B cell (primary cell): ENCODE measurements at regions of chr17 and their contacts with region 1.

Region 1: DNA sequence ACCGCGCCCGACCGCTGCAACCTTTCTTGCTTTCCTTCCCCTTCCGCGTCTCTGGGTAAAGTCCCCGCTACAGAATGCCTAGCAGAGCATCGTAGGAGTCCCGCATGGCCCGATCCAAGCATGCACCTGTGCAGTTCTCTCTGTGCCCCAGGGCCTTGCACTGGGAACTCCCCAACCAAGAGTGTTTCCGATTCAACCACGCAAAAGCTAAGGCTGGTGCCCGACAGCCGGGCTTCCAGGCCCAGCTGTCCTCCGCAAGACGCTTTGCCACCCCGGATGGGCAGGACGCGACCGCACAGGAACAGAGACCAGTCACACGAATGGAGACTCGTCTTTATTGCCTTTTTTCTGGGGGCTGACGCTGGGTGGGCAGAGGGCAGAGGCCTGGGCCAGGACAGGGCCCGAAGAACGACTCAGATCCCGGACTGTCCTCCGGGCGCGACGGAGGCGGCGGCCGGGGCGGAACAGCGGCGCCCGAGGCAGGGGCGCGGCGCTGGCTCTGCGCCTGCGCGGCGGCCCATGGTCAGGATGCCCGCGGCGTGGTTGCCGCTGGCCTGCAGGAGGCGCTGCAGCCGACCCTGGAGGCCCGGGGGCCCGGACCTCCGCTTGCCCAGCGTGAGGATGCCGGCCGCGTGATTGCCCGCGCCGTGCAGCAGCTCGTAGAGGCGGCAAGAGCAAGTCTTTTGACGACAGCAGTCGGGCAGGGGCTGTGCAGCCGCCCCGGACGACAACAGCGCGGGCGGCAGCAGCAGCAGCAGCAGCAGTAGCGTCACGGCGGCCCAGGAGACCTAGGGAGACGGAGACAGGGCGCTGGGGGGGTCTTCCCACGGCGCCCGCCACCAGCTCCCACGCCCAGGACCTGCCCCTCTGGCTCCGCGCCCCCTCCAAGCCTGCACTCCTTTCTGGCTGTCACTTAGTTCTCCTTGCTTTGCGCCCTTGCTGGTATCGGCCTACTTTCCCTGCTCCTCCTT is 1.2 kb downstream of the HCRT start:
- DNase-seq: peak; percentile 91
- ATAC-seq: peak; percentile 69
- H3K4me3 ChIP-seq: peak overlapping the region; percentile 64 to 81 (median 74)
- H3K4me3 Mint-ChIP-seq: peak overlapping the region; percentile 93
- H3K27ac ChIP-seq: peak overlapping the region; percentile 90 to 95
- H3K27ac Mint-ChIP-seq: peak overlapping the region; percentile 93
- H3K4me1 ChIP-seq: peaks cover 37 to 49% of the 10 kb centered on the region in 2 donors
- H3K4me1 Mint-ChIP-seq: peaks cover 49% of the 10 kb centered on the region
- H3K27me3 ChIP-seq: peaks cover 0 to 17% (median 2%) of the 10 kb centered on the region in 4 experiments
- H3K27me3 Mint-ChIP-seq: no peaks in the 10 kb centered on the region
- CTCF ChIP-seq: peak; percentile 90

Region 2: GRCh38 chr17:40818733-40819527 is 1365.1 kb before region 1 on chr17:
- CTCF ChIA-PET with region 1: no interaction called
- POLR2A ChIA-PET with region 1: no interaction called
- intact Hi-C with region 1: loop called (anchors 5 kb)
- DNase-seq: peak; percentile 95
- ATAC-seq: peak; percentile 91
- H3K4me3 ChIP-seq: peak overlapping the region; percentile 50 to 95 (median 71)
- H3K4me3 Mint-ChIP-seq: peak overlapping the region; percentile 89
- H3K27ac ChIP-seq: peak overlapping the region; percentile 68 to 86
- H3K27ac Mint-ChIP-seq: peak overlapping the region; percentile 85
- H3K4me1 ChIP-seq: peaks cover 8 to 13% of the 10 kb centered on the region in 2 donors
- H3K4me1 Mint-ChIP-seq: peaks cover 18% of the 10 kb centered on the region
- H3K27me3 ChIP-seq: peaks cover 0 to 6% (median 0%) of the 10 kb centered on the region in 4 experiments
- H3K27me3 Mint-ChIP-seq: peaks cover 16% of the 10 kb centered on the region
- CTCF ChIP-seq: no peak

Region 3: GRCh38 chr17:42112552-42113176 is 71.4 kb before region 1 on chr17 and contains the start of gene DHX58:
- CTCF ChIA-PET with region 1: interaction called, 14 read pairs
- POLR2A ChIA-PET with region 1: interaction called, 4 read pairs
- intact Hi-C with region 1: loop called (anchors 2 kb)
- DNase-seq: peak; percentile 91
- ATAC-seq: peak; percentile 71
- H3K4me3 ChIP-seq: peak within 1 kb of the TSS; percentile 26 to 77 (median 53)
- H3K4me3 Mint-ChIP-seq: peak within 1 kb of the TSS; percentile 88
- H3K27ac ChIP-seq: peak within 1 kb of the TSS; percentile 85 to 88
- H3K27ac Mint-ChIP-seq: peak within 1 kb of the TSS; percentile 97
- H3K4me1 ChIP-seq: peaks cover 38 to 54% of the 10 kb centered on the region in 2 donors
- H3K4me1 Mint-ChIP-seq: peaks cover 57% of the 10 kb centered on the region
- H3K27me3 ChIP-seq: no peaks in the 10 kb centered on the region
- H3K27me3 Mint-ChIP-seq: no peaks in the 10 kb centered on the region
- CTCF ChIP-seq: no peak
- total RNA-seq, gene DHX58: 34.6 and 39.7 TPM in 2 replicates

Region 4: GRCh38 chr17:42153919-42154742 is 29.9 kb before region 1 on chr17:
- CTCF ChIA-PET with region 1: interaction called, 3 read pairs
- POLR2A ChIA-PET with region 1: no interaction called
- intact Hi-C with region 1: loop called (anchors 1 kb)
- DNase-seq: no peak
- ATAC-seq: no peak
- H3K4me3 ChIP-seq: peak overlapping the region; percentile 91 to 100 (median 99)
- H3K4me3 Mint-ChIP-seq: peak overlapping the region; percentile 94
- H3K27ac ChIP-seq: peak overlapping the region; percentile 74 to 94
- H3K27ac Mint-ChIP-seq: peak overlapping the region; percentile 96
- H3K4me1 ChIP-seq: peaks cover 14 to 23% of the 10 kb centered on the region in 2 donors
- H3K4me1 Mint-ChIP-seq: peaks cover 34% of the 10 kb centered on the region
- H3K27me3 ChIP-seq: no peaks in the 10 kb centered on the region
- H3K27me3 Mint-ChIP-seq: no peaks in the 10 kb centered on the region
- CTCF ChIP-seq: no peak

Region 5: DNA sequence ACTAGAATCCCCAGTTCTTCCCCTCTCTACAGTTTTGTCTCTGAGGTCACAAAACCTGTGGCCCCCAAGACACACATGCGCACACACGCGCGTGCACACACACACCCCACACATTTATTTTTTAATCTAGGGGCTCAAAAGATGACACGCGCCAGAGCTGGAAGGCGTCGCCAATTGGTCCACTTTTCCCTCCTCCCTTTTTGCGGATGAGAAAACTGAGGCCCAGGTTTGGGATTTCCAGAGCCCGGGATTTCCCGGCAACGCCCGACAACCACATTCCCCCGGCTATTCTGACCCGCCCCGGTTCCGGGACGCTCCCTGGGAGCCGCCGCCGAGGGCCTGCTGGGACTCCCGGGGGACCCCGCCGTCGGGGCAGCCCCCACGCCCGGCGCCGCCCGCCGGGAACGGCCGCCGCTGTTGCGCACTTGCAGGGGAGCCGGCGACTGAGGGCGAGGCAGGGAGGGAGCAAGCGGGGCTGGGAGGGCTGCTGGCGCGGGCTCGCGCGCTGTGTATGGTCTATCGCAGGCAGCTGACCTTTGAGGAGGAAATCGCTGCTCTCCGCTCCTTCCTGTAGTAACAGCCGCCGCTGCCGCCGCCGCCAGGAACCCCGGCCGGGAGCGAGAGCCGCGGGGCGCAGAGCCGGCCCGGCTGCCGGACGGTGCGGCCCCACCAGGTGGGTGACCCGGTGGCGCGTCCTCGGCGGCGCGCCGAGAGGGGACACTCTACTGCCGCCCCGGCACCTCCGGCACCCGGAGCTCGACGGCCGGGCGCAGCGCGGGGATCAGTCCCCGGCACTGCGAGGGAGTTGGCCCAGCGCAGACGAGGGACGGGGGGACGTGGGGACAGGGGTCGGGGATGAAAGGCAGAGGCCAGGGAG is 104.1 kb after region 1 on chr17 and contains the start of gene STAT5A:
- CTCF ChIA-PET with region 1: interaction called, 5 read pairs
- POLR2A ChIA-PET with region 1: interaction called, 6 read pairs
- intact Hi-C with region 1: loop called (anchors 2 kb)
- DNase-seq: peak; percentile 87
- ATAC-seq: peak; percentile 83
- H3K4me3 ChIP-seq: peak within 1 kb of the TSS; percentile 62 to 93 (median 73)
- H3K4me3 Mint-ChIP-seq: peak within 1 kb of the TSS; percentile 97
- H3K27ac ChIP-seq: peak within 1 kb of the TSS; percentile 75 to 89
- H3K27ac Mint-ChIP-seq: peak within 1 kb of the TSS; percentile 91
- H3K4me1 ChIP-seq: peaks cover 24 to 36% of the 10 kb centered on the region in 2 donors
- H3K4me1 Mint-ChIP-seq: peaks cover 41% of the 10 kb centered on the region
- H3K27me3 ChIP-seq: no peaks in the 10 kb centered on the region
- H3K27me3 Mint-ChIP-seq: no peaks in the 10 kb centered on the region
- CTCF ChIP-seq: no peak
- total RNA-seq, gene STAT5A: 104 and 110 TPM in 2 replicates

Region 6: DNA sequence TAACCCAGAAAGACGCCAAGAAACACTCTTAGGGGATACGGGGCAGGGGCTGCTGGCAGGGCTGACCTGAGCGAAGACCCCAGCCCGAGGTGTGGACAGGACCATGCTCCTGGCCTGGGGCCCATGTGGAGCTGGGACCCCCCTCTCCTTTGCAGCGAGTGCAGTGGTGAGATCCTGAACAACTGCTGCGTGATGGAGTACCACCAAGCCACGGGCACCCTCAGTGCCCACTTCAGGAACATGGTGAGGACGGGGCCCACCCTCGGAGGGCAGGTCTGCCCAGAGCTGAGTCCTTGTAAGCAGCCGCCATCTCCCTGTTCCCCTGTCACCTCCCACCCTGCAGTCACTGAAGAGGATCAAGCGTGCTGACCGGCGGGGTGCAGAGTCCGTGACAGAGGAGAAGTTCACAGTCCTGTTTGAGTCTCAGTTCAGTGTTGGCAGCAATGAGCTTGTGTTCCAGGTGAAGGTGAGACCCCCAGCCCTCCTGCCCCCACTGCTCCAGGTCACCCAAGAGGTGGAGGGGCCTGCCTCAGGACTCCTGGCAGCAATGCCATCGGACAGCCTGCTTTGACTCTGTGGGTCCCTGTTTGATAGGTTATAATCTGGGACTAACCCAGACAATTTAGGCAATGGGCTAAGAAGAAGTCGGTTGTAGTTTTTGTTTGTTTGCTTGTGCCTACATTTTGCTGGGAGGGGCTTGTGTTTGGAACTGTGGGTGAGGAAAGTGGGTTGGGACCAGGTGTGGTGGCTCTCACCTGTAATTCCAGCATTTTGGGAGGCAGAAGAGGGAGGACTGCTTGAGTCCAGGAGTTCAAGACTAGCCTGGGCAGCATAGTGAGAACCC is 120.4 kb after region 1 on chr17:
- CTCF ChIA-PET with region 1: no interaction called
- POLR2A ChIA-PET with region 1: no interaction called
- intact Hi-C with region 1: no loop called
- DNase-seq: no peak
- ATAC-seq: no peak
- H3K4me3 ChIP-seq: no peak overlapping the region
- H3K4me3 Mint-ChIP-seq: no peak overlapping the region
- H3K27ac ChIP-seq: no peak overlapping the region
- H3K27ac Mint-ChIP-seq: no peak overlapping the region
- H3K4me1 ChIP-seq: no peaks in the 10 kb centered on the region
- H3K4me1 Mint-ChIP-seq: no peaks in the 10 kb centered on the region
- H3K27me3 ChIP-seq: no peaks in the 10 kb centered on the region
- H3K27me3 Mint-ChIP-seq: no peaks in the 10 kb centered on the region
- CTCF ChIP-seq: no peak

Region 7: DNA sequence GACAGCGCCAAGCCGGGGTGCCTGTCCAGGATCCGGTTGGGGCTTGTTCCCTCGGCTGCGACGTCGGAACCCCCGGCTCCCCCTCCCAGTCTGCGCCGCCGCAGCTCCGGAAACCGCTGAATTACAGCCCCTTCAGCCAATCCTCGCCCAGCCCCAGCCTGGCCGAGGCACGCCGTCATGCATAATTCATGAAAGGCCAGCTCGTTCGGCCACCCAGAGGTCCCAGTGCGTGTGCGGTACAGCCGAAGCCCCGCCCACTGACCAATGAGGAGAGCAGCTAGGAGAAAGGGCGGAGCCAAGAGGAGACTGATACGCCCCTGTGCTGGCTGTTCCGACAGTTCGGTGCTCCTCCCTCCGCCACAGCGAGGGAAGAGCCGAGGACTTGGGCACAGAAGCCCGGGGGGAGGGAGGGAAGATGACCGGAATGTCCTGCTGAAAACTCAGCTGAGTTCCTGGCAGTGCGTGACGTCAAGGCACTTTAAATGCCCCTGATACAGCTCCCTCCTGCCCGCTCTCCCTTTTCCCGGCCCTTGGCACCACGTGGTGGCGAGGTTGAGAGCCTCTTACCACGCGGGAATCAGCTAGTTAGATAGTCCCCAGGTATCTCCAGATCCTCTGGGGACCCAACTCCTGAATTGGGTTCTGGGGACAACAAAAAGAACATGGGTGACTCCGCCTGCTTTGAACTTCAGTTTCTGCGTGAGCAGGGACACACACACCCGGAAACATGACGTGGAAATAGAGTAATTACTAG is 204.5 kb after region 1 on chr17 and contains the start of gene STAT3:
- CTCF ChIA-PET with region 1: no interaction called
- POLR2A ChIA-PET with region 1: no interaction called
- intact Hi-C with region 1: loop called (anchors 2 kb)
- DNase-seq: peak; percentile 100
- ATAC-seq: peak; percentile 89
- H3K4me3 ChIP-seq: peak within 1 kb of the TSS; percentile 67 to 97 (median 91)
- H3K4me3 Mint-ChIP-seq: peak within 1 kb of the TSS; percentile 98
- H3K27ac ChIP-seq: peak within 1 kb of the TSS; percentile 97
- H3K27ac Mint-ChIP-seq: peak within 1 kb of the TSS; percentile 99
- H3K4me1 ChIP-seq: peaks cover 19 to 34% of the 10 kb centered on the region in 2 donors
- H3K4me1 Mint-ChIP-seq: peaks cover 51% of the 10 kb centered on the region
- H3K27me3 ChIP-seq: no peaks in the 10 kb centered on the region
- H3K27me3 Mint-ChIP-seq: no peaks in the 10 kb centered on the region
- CTCF ChIP-seq: no peak
- total RNA-seq, gene STAT3: 140 and 151 TPM in 2 replicates

Region 8: DNA sequence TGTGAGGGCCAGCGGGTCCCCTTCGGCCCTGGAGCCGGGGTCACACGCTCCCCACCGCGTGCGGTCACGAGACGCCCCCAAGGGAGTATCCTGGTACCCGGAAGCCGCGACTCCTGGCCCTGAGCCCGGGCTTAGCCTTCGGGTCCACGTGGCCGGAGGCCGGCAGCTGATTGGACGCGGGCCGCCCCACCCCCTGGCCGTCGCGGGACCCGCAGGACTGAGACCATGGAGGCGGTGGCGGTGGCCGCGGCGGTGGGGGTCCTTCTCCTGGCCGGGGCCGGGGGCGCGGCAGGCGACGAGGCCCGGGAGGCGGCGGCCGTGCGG is 352.0 kb after region 1 on chr17 and contains the start of gene NAGLU:
- CTCF ChIA-PET with region 1: no interaction called
- POLR2A ChIA-PET with region 1: interaction called, 14 read pairs
- intact Hi-C with region 1: no loop called
- DNase-seq: peak; percentile 95
- ATAC-seq: peak; percentile 90
- H3K4me3 ChIP-seq: peak within 1 kb of the TSS; percentile 51 to 82 (median 70)
- H3K4me3 Mint-ChIP-seq: peak within 1 kb of the TSS; percentile 93
- H3K27ac ChIP-seq: peak within 1 kb of the TSS; percentile 86 to 94
- H3K27ac Mint-ChIP-seq: peak within 1 kb of the TSS; percentile 87
- H3K4me1 ChIP-seq: peaks cover 24 to 31% of the 10 kb centered on the region in 2 donors
- H3K4me1 Mint-ChIP-seq: peaks cover 41% of the 10 kb centered on the region
- H3K27me3 ChIP-seq: no peaks in the 10 kb centered on the region
- H3K27me3 Mint-ChIP-seq: no peaks in the 10 kb centered on the region
- CTCF ChIP-seq: no peak
- total RNA-seq, gene NAGLU: 44.8 and 47.1 TPM in 2 replicates